Calu3 (cell line): ENCODE measurements at regions of chr14 and their contacts with region 1.

Region 1: DNA sequence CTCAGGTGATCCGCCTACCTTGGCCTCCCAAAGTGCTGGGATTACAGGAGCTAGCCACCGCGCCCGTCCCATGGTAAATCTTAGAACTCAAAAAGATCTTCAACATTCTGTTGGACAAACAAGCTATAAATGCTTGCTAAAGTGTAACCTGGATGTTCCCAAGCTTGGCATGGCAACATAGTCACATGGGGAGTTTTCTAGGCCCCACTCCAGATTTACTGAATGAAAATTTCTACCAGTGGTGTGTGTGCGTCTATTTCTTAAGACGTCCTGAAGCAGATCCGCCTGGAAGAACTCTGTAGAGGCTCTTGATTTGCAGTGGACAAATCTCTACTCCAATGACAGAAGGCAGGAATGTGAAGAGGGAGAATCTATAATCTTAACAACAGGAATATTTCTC is 59.9 kb downstream of the ZFYVE21 start:
- DNase-seq: no peak
- H3K4me3 Mint-ChIP-seq: no peak overlapping the region
- H3K27ac Mint-ChIP-seq: no peak overlapping the region
- H3K4me1 Mint-ChIP-seq: no peaks in the 10 kb centered on the region
- H3K27me3 Mint-ChIP-seq: no peaks in the 10 kb centered on the region
- CTCF ChIP-seq: no peak

Region 2: GRCh38 chr14:103718572-103718971 is 56.9 kb before region 1 on chr14:
- CTCF ChIA-PET with region 1: interaction called, 10 read pairs
- intact Hi-C with region 1: no loop called
- DNase-seq: no peak
- H3K4me3 Mint-ChIP-seq: no peak overlapping the region
- H3K27ac Mint-ChIP-seq: no peak overlapping the region
- H3K4me1 Mint-ChIP-seq: peaks cover 23% of the 10 kb centered on the region
- H3K27me3 Mint-ChIP-seq: no peaks in the 10 kb centered on the region
- CTCF ChIP-seq: no peak

Region 3: DNA sequence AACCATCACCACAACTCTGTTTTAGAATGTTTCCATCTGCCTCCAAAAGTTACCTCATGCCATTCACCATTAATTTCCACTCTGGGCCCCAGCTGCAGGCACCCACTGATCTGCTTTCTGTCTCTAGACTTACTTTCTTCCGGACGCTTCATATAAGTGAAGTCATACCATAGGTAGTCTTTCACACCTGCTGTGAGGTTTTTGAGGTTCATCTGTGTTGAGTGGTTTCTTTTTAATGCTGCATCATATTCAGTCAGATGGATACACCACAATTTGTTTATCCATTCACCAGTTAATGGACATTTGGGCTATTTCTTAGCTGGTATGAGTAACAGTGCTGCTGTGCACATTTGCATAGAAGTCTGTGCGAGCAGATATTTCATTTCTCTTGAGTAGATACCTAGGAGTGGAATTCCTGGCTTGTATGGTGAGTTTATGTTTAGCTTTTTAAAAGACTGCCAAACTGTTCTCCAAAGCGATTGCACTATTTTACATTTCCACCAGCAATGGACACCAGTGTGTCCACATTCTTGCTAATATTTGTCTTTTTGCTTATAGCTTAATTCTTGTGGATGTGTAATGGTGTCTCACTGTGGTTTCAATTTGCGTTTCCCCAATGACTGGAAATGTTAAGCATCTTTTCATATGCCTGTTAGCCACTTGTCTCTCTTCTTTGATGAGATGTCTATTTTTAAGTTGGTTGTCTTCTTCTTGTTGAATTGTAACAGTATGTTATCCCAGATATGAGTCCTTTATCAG is 11.6 kb before region 1 on chr14:
- CTCF ChIA-PET with region 1: no interaction called
- intact Hi-C with region 1: no loop called
- DNase-seq: no peak
- H3K4me3 Mint-ChIP-seq: no peak overlapping the region
- H3K27ac Mint-ChIP-seq: no peak overlapping the region
- H3K4me1 Mint-ChIP-seq: no peaks in the 10 kb centered on the region
- H3K27me3 Mint-ChIP-seq: no peaks in the 10 kb centered on the region
- CTCF ChIP-seq: no peak

Region 4: DNA sequence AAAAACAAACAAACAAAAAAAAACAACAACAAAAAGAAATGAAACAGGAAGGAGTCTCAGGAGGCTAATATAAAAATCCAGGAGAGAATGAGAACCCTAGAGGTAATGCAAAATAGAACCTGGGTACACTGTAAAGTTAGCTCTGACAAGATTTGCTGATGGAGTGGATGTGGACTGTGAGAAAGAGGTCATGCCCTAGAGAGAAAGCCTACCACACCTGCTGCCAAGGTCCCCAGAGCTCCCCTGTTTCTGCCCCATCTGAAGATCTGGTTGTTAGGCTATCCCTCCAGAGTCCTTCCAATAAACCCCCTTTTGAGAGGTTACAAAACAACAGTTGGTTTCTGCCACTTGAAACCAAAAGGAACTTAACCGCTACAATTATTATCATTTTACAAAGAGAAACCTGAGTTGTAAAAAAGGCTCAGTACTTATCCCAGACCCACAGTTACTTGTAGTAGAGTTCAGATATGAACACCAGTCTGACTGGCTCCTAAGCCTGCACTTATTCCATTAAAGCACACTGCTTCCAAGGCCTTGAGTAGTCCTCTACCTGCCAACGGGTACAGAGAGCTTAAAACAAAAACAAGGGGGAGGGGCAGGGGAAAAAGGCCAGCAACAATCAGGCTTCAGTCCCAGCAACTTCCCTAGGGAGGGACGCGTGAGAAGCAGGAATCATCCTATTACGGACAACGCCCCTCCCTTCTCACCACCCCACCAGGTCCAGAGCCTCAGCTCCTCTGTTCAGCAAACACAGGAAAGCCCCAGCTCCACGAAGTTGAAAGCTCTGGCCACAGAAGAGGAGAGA is 44.2 kb after region 1 on chr14:
- CTCF ChIA-PET with region 1: no interaction called
- intact Hi-C with region 1: no loop called
- DNase-seq: peak; percentile 2
- H3K4me3 Mint-ChIP-seq: peak overlapping the region; percentile 22
- H3K27ac Mint-ChIP-seq: no peak overlapping the region
- H3K4me1 Mint-ChIP-seq: peaks cover 22% of the 10 kb centered on the region
- H3K27me3 Mint-ChIP-seq: no peaks in the 10 kb centered on the region
- CTCF ChIP-seq: no peak